A549 (cell line): ENCODE measurements at regions of chr1 and their contacts with region 1.

Region 1: GRCh38 chr1:47388891-47389238 is 27.2 kb upstream of the FOXE3 start:
- DNase-seq: peak; percentile 53 to 60
- ATAC-seq: peak; percentile 94 to 96
- H3K4me3 ChIP-seq: no peak overlapping the region
- H3K27ac ChIP-seq: no peak overlapping the region
- H3K4me1 ChIP-seq: no peaks in the 10 kb centered on the region
- CTCF ChIP-seq: peak; percentile 63
- EP300 ChIP-seq: no peak
- POLR2A ChIP-seq: no peak
- RAD21 ChIP-seq: peak; percentile 70 to 74

Region 2: DNA sequence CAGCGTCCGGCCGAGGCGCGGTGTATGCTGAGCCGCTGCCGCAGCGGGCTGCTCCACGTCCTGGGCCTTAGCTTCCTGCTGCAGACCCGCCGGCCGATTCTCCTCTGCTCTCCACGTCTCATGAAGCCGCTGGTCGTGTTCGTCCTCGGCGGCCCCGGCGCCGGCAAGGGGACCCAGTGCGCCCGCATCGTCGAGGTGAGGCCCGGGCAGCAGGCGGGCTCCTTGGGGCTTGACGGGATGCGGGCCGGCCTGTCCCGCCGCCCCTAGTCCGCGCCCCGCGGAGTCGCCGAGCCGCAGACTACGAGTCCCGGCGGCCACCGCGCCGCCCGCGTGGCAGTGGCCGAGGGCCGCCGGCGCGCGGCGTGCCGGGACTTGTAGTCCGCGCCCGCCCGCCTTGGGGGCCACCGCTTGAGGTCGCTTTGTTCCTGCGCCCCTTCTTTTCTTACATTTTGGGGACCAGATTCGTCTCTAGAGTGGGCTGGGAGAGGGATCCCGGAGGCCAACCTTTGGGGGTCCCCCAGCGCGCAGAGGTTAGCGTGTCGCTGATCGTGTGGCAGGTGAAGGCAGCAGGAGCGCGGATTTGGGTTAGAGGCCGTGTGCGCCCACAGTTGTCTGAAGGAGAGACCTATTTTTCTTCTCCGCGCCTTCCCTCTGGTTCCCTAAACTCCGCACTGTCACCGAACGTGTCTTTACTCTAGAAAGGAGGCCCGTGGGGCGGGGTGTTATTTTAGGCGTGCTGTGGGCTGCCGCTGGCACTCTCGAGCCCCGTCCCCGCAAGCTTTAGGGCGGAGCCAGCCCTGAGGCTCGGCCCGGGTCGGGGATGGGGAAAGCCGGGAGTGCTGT is 54.7 kb before region 1 on chr1:
- CTCF ChIA-PET with region 1: no interaction called
- POLR2A ChIA-PET with region 1: no interaction called
- DNase-seq: peak; percentile 80 to 87
- ATAC-seq: peak; percentile 94 to 95
- H3K4me3 ChIP-seq: peak overlapping the region; percentile 79
- H3K27ac ChIP-seq: peak overlapping the region; percentile 90 to 99
- H3K4me1 ChIP-seq: peaks cover 28% of the 10 kb centered on the region
- CTCF ChIP-seq: peak; percentile 35
- EP300 ChIP-seq: no peak
- POLR2A ChIP-seq: peak; percentile 46
- RAD21 ChIP-seq: no peak

Region 3: GRCh38 chr1:47424336-47424982 is 35.6 kb after region 1 on chr1:
- CTCF ChIA-PET with region 1: interaction called, 17 read pairs
- POLR2A ChIA-PET with region 1: no interaction called
- DNase-seq: peak; percentile 63 to 65
- ATAC-seq: peak; percentile 92 to 97
- H3K4me3 ChIP-seq: no peak overlapping the region
- H3K27ac ChIP-seq: no peak overlapping the region
- H3K4me1 ChIP-seq: no peaks in the 10 kb centered on the region
- CTCF ChIP-seq: peak; percentile 65
- EP300 ChIP-seq: no peak
- POLR2A ChIP-seq: no peak
- RAD21 ChIP-seq: peak; percentile 22 to 38; a peak in 3 of 5 replicates

Region 4: DNA sequence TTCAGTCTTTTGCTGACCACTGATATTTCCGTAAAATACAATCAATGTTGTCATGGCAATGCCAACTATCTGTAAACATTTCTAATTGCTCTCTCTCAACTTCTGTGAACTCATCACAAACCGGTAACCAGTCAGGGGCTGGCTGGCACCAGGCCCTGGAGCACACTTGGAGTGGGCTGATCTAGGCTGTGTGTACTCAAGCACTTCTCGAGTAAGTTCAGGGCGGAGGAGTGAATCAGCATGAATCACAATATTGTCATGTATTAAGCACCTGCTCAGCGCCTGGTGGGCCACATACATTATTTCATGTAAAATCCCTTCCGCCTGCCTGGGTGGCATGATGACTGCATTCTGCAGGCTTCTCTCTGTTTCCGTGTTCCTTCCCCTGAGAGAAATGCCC is 261.3 kb after region 1 on chr1:
- CTCF ChIA-PET with region 1: no interaction called
- POLR2A ChIA-PET with region 1: no interaction called
- DNase-seq: peak; percentile 71 to 87
- ATAC-seq: peak; percentile 97
- H3K4me3 ChIP-seq: no peak overlapping the region
- H3K27ac ChIP-seq: peak overlapping the region; percentile 76 to 83
- H3K4me1 ChIP-seq: peaks cover 23% of the 10 kb centered on the region
- CTCF ChIP-seq: no peak
- EP300 ChIP-seq: peak in 1 of 2 experiments; percentile 32; a peak in 1 of 5 replicates
- POLR2A ChIP-seq: no peak
- RAD21 ChIP-seq: no peak; a peak in 1 of 5 replicates